ENCODE measurements at regions of chr5 and their contacts with region 1.

Region 1: DNA sequence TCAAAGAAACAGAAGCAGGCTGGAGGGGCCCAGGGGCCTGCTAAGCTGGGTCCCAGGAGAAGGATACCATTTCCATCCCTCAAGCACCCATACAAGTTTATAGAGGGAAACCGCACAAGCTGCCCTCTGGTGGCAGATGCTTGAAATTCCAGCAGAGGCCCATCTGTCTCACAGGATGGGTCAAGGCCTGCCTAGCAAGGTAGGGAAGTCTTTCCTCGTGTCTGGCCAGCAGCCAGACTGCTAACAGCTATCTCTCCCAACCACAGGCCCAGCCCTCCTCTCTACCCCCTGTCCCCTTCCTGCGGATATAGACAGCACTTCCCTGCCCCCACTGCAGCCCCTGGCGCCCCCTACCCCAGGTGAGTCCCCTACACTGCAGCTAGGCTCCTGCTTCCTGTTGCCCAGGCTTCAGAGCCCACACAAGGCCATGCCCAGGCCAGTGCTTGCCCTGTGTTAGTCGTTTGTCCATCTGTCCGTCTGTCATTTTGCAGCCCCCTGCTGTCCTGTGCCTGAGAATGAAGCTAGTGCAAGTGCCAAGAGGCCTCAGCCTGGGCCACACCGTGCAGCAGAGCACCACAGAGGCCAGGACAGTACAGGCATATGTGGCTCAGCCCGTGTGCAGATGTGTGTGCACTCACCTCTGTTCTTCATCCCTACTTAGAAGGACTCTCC is 26.2 kb downstream of the TCF7 start:
- DNase-seq: peak; percentile 80
- ATAC-seq: peak; percentile 48
- H3K4me3 Mint-ChIP-seq: no peak overlapping the region
- H3K27ac Mint-ChIP-seq: peak overlapping the region; percentile 46
- H3K4me1 Mint-ChIP-seq: peaks cover 72% of the 10 kb centered on the region
- H3K27me3 Mint-ChIP-seq: no peaks in the 10 kb centered on the region
- CTCF ChIP-seq: peak; percentile 90

Region 2: DNA sequence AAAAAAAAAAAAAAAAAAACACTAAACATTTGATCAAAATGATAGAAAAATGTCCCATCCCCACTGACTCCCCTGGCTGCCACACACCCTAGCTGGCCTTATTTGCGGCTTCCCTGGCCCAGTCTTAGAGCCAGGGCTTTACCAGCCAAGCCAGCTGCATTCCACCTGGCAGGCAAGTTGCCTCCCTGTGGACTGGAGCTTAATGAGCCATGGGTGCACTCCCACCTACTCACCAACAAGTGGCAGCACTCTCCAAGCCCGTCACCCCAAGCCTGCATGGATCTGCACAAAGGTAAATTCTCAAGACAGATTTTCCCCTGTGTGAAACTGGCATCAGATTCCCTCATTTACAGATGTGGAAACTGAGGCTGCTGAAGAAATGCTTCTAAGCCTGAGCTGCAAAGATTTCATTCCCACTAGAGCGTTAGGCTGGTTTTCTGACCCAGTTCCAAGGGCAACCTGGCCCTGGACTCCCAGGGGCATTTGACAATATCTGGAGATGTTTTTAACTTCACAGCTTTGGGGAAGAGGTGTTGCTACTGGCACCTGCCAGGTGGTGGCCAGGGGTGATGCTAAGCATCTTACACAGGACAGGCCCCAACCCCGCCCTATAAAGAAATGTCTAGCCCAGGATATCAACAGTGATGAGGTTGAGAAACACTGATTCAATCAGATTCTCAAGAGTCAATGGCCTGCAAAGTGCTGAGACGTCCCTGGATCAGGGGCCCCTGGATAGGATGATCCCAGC is 114.0 kb before region 1 on chr5:
- CTCF ChIA-PET with region 1: interaction called, 1,049 read pairs
- POLR2A ChIA-PET with region 1: no interaction called
- intact Hi-C with region 1: no loop called
- DNase-seq: peak; percentile 73
- ATAC-seq: peak; percentile 99
- H3K4me3 Mint-ChIP-seq: no peak overlapping the region
- H3K27ac Mint-ChIP-seq: no peak overlapping the region
- H3K4me1 Mint-ChIP-seq: no peaks in the 10 kb centered on the region
- H3K27me3 Mint-ChIP-seq: no peaks in the 10 kb centered on the region
- CTCF ChIP-seq: peak; percentile 43

Region 3: DNA sequence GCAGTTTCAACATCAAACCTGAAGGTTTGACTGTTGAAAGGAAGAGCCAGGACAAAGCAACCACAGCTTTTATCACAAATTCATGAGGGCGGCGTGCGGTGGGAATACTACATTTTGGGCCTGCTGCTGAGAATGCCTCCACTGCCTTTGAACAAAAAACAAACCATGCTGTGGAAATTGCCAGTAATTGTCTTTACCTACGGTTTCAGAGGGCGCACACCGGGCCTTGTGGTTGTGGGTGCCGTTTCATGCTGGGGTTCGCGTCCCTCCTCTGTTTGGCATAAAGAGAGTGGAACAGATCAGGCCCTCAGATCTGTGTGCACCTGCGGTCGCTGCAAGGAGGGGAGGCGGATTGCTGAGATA is 53.7 kb before region 1 on chr5:
- CTCF ChIA-PET with region 1: interaction called, 27 read pairs
- POLR2A ChIA-PET with region 1: interaction called, 4 read pairs
- intact Hi-C with region 1: no loop called
- DNase-seq: peak; percentile 93
- ATAC-seq: peak; percentile 82
- H3K4me3 Mint-ChIP-seq: peak overlapping the region; percentile 46
- H3K27ac Mint-ChIP-seq: peak overlapping the region; percentile 76
- H3K4me1 Mint-ChIP-seq: peaks cover 76% of the 10 kb centered on the region
- H3K27me3 Mint-ChIP-seq: no peaks in the 10 kb centered on the region
- CTCF ChIP-seq: no peak

Region 4: GRCh38 chr5:134153657-134154056 is 13.0 kb after region 1 on chr5:
- CTCF ChIA-PET with region 1: interaction called, 101 read pairs
- POLR2A ChIA-PET with region 1: interaction called, 63 read pairs
- intact Hi-C with region 1: no loop called
- DNase-seq: no peak
- ATAC-seq: no peak
- H3K4me3 Mint-ChIP-seq: no peak overlapping the region
- H3K27ac Mint-ChIP-seq: peak overlapping the region; percentile 4
- H3K4me1 Mint-ChIP-seq: peaks cover 72% of the 10 kb centered on the region
- H3K27me3 Mint-ChIP-seq: no peaks in the 10 kb centered on the region
- CTCF ChIP-seq: no peak